Endothelial cell of umbilical vein (primary cell): ENCODE measurements at regions of chr13 and their contacts with region 1.

Region 1: DNA sequence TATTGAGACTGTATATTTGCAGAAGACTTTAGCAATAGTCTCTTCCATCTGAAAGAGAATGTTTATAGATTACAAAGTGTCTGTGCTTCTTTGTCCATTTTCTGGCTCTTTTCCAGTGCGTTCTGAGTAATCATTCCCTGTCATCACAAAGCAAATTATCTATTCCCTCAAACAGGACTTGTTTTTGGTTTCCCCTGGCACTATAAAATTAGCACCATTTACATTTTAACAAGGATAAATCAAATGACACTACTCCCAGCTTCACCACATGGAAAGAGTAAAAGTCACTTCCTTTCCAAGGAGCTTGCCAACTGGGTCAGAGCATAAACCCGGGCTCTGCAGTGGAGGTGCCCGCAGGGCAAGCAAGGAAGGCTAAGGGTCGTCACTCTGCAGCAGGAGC is 88.1 kb downstream of the SHISA2 start:
- DNase-seq: peak; percentile 38
- H3K4me3 ChIP-seq: no peak overlapping the region
- H3K27ac ChIP-seq: no peak overlapping the region
- H3K4me1 ChIP-seq: peaks cover 19% of the 10 kb centered on the region
- H3K27me3 ChIP-seq: peaks cover 0 to 5% of the 10 kb centered on the region in 2 experiments
- CTCF ChIP-seq: no peak
- POLR2A ChIP-seq: no peak

Region 2: GRCh38 chr13:25752957-25753551 is 210.6 kb before region 1 on chr13:
- CTCF ChIA-PET with region 1: no interaction called
- POLR2A ChIA-PET with region 1: no interaction called
- dilution Hi-C with region 1: no loop called
- intact Hi-C with region 1: no loop called
- DNase-seq: peak; percentile 43
- H3K4me3 ChIP-seq: no peak overlapping the region
- H3K27ac ChIP-seq: no peak overlapping the region
- H3K4me1 ChIP-seq: no peaks in the 10 kb centered on the region
- H3K27me3 ChIP-seq: no peaks in the 10 kb centered on the region
- CTCF ChIP-seq: no peak
- POLR2A ChIP-seq: no peak

Region 3: GRCh38 chr13:25836574-25837336 is 126.9 kb before region 1 on chr13:
- CTCF ChIA-PET with region 1: no interaction called
- POLR2A ChIA-PET with region 1: no interaction called
- dilution Hi-C with region 1: no loop called
- intact Hi-C with region 1: loop called (anchors 10 kb)
- DNase-seq: no peak
- H3K4me3 ChIP-seq: no peak overlapping the region
- H3K27ac ChIP-seq: no peak overlapping the region
- H3K4me1 ChIP-seq: no peaks in the 10 kb centered on the region
- H3K27me3 ChIP-seq: peaks cover 8 to 11% of the 10 kb centered on the region in 2 experiments
- CTCF ChIP-seq: no peak
- POLR2A ChIP-seq: no peak